ENCODE measurements at regions of chr3 and their contacts with region 1.

Region 1: GRCh38 chr3:13657660-13658435 is 108.9 kb downstream of the FBLN2 start:
- DNase-seq: peak; percentile 44 to 80 (median 68)
- ATAC-seq: peak; percentile 83
- H3K4me3 ChIP-seq: no peak overlapping the region
- H3K4me3 Mint-ChIP-seq: no peak overlapping the region
- H3K27ac ChIP-seq: no peak overlapping the region
- H3K27ac Mint-ChIP-seq: no peak overlapping the region
- H3K4me1 ChIP-seq: peaks cover 26% of the 10 kb centered on the region
- H3K4me1 Mint-ChIP-seq: peaks cover 29% of the 10 kb centered on the region
- H3K27me3 ChIP-seq: no peaks in the 10 kb centered on the region
- H3K27me3 Mint-ChIP-seq: peaks cover 12% of the 10 kb centered on the region
- CTCF ChIP-seq: peak; percentile 66

Region 2: DNA sequence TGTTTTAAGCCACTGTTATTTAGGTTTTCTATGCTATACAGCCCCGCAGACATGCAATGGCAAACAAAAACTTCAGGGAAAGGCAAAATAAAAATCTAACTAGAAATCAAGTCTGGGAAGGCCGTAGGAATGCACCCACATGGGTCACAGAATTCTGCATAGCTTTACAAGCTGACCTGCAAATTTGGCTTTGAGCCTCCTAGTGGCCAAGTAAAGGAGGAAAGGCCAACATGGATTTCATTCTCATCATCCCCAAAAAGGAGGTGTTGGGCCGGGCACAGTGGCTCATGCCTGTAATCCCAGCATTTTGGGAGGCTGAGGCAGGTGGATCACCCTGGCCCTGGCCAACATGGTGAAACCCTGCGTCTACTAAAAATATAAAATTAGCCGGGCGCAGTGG is 15.4 kb after region 1 on chr3:
- CTCF ChIA-PET with region 1: interaction called, 44 read pairs
- POLR2A ChIA-PET with region 1: no interaction called
- intact Hi-C with region 1: no loop called
- DNase-seq: no peak
- ATAC-seq: no peak
- H3K4me3 ChIP-seq: no peak overlapping the region
- H3K4me3 Mint-ChIP-seq: no peak overlapping the region
- H3K27ac ChIP-seq: no peak overlapping the region
- H3K27ac Mint-ChIP-seq: no peak overlapping the region
- H3K4me1 ChIP-seq: no peaks in the 10 kb centered on the region
- H3K4me1 Mint-ChIP-seq: no peaks in the 10 kb centered on the region
- H3K27me3 ChIP-seq: no peaks in the 10 kb centered on the region
- H3K27me3 Mint-ChIP-seq: peaks cover 8% of the 10 kb centered on the region
- CTCF ChIP-seq: no peak

Measured in CD8-positive, alpha-beta T cell (primary cell).